ENCODE measurements at regions of chr12 and their contacts with region 1.

Region 1: GRCh38 chr12:120741476-120742421 is 16.1 kb downstream of the ACADS start:
- DNase-seq: no peak
- H3K4me3 ChIP-seq: no peak overlapping the region
- H3K27ac ChIP-seq: no peak overlapping the region
- H3K4me1 ChIP-seq: no peaks in the 10 kb centered on the region
- H3K27me3 ChIP-seq: no peaks in the 10 kb centered on the region
- CTCF ChIP-seq: no peak
- POLR2A ChIP-seq: no peak

Region 2: GRCh38 chr12:120950807-120951206 is 209.1 kb after region 1 on chr12:
- intact Hi-C with region 1: loop called (anchors 5 kb)
- DNase-seq: no peak
- H3K4me3 ChIP-seq: no peak overlapping the region
- H3K27ac ChIP-seq: no peak overlapping the region
- H3K4me1 ChIP-seq: no peaks in the 10 kb centered on the region
- H3K27me3 ChIP-seq: no peaks in the 10 kb centered on the region
- CTCF ChIP-seq: no peak
- POLR2A ChIP-seq: no peak